Endothelial cell of umbilical vein (primary cell): ENCODE measurements at regions of chr16 and their contacts with region 1.

Region 1: GRCh38 chr16:88737298-88738150 is 31.2 kb downstream of the CTU2 start:
- DNase-seq: peak; percentile 50
- H3K4me3 ChIP-seq: no peak overlapping the region
- H3K27ac ChIP-seq: no peak overlapping the region
- H3K4me1 ChIP-seq: no peaks in the 10 kb centered on the region
- H3K27me3 ChIP-seq: no peaks in the 10 kb centered on the region
- CTCF ChIP-seq: peak; percentile 97 to 99
- POLR2A ChIP-seq: no peak

Region 2: DNA sequence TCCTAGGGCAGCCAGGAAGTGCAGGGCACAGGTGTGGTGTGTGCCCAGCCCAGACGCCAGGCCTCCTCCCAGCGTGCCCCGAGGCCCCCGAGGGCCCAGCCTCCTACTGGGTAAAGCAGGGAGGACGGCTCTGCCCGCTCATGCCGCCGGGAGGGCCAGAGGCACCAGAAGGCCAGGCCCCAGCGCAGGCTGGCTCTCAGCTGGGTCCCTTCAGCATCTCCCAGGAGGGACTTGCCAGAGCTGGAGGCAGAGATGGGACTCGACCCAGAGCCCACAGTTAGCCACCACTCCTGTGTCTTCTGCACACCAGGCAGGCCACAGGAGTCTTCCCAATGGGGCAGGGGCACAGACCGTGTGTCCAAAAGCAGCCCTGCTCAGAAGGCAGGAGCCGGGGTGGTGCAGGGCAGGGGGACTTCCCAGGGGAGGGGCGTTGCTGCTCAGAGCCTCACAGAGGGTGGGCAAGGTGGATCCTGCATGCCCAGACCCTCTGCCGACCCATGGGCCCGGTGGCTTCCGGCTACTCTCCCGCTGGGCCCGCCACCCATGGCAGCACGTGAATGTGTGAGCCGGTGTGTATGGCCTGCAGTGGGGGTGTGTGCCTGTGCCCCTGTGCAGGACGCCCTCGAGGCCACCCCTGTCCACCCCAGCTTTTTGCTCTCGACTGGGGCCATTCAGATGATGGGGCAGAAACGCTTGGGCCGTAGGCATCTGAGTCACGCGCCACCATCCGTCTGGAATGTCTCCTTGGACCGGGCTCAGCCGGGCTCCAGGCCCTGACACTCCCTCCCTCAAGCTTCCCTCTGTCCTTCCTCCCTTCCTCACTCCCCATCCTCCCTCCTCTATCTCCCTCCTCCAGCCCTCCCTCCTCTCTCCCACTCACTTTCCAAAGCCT is 360.4 kb before region 1 on chr16:
- CTCF ChIA-PET with region 1: no interaction called
- POLR2A ChIA-PET with region 1: no interaction called
- dilution Hi-C with region 1: no loop called
- intact Hi-C with region 1: no loop called
- DNase-seq: no peak
- H3K4me3 ChIP-seq: no peak overlapping the region
- H3K27ac ChIP-seq: no peak overlapping the region
- H3K4me1 ChIP-seq: no peaks in the 10 kb centered on the region
- H3K27me3 ChIP-seq: no peaks in the 10 kb centered on the region
- CTCF ChIP-seq: no peak
- POLR2A ChIP-seq: no peak

Region 3: DNA sequence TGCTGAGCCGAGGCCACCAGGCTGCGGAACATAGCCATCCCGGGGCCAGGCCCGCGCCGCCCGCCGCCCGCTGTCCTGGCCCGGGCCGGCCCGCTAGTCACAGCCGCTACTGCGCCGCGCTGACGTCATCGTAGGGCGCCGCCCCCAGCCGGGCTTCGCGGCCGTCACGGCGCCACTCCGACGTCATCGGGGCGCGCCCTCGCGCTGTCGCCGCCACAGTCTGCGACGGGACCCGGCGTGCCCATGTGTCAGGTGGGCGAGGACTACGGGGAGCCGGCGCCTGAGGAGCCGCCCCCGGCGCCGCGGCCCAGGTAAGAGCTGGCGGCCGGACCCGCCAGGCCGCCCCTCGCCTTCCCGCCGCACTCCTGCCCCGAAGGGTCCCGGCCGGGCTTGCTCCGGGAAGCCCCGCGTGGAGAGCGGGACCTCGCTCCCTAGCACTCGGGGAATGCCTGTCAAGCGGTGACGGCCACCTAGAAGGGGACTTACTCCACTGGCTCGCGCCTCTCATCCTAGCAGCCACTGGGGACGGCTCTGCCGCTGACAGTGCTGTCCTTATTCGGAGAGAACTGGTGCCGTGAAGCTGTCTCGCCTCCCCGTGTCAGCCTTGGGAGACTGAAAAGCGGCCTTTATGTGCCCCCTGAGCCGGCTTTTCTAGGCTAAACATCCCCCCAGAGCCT is 31.1 kb before region 1 on chr16 and contains the starts of genes CTU2 and RNF166:
- CTCF ChIA-PET with region 1: interaction called, 25 read pairs
- POLR2A ChIA-PET with region 1: no interaction called
- dilution Hi-C with region 1: no loop called
- intact Hi-C with region 1: no loop called
- DNase-seq: peak; percentile 84
- H3K4me3 ChIP-seq: peak within 1 kb of the TSS; percentile 69 to 90 (median 79)
- H3K27ac ChIP-seq: peak within 1 kb of the TSS; percentile 45
- H3K4me1 ChIP-seq: peaks cover 45% of the 10 kb centered on the region
- H3K27me3 ChIP-seq: no peaks in the 10 kb centered on the region
- CTCF ChIP-seq: no peak
- POLR2A ChIP-seq: peak; percentile 78
- total RNA-seq, gene CTU2: 33.7 and 37.5 TPM in 2 replicates
- total RNA-seq, gene RNF166: 38.8 and 41.8 TPM in 2 replicates

Region 4: GRCh38 chr16:88754912-88755744 is 17.6 kb after region 1 on chr16:
- CTCF ChIA-PET with region 1: interaction called, 31 read pairs
- POLR2A ChIA-PET with region 1: no interaction called
- dilution Hi-C with region 1: no loop called
- intact Hi-C with region 1: no loop called
- DNase-seq: peak; percentile 20
- H3K4me3 ChIP-seq: no peak overlapping the region
- H3K27ac ChIP-seq: no peak overlapping the region
- H3K4me1 ChIP-seq: peaks cover 5% of the 10 kb centered on the region
- H3K27me3 ChIP-seq: no peaks in the 10 kb centered on the region
- CTCF ChIP-seq: peak; percentile 41 to 43
- POLR2A ChIP-seq: no peak

Region 5: DNA sequence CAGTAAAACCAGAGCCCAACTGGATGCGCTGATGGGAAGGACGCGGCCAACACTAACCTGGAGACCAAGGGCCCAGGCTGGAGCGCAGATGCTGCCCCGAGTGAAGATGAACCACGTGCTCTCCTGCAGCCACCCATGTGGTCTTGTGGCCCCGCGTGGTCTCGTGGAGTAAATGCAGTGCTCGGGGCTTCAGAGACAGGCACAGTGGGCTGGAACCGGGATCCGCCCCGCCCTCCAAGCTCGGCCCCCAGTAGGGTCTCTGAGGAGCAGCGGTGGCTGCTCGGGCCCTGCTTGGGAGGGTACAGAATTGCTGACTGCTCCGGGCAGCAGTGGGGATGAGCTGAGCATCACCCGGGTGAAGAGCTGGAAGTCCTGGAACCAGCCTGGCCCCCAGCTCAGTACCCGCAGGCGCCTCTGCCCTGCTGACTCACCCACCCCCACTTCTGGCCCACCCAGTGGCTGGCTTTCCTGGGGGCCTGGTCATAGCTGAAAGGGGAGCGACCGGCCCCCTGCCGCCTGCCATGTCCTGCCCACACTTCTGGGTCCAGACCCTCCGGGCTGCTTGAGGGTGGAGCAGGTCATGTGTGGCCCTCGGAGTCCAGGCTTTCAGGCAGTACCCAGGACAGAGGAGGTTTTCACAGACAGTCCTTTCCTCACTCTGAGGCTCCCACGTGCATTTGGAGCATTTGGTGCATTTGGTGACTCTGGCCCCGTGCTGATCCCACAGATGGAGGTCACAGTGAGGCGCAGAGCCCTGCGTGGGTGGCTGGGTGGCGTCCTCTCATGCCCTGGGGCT is 54.4 kb after region 1 on chr16:
- CTCF ChIA-PET with region 1: interaction called, 56 read pairs
- POLR2A ChIA-PET with region 1: no interaction called
- dilution Hi-C with region 1: no loop called
- intact Hi-C with region 1: no loop called
- DNase-seq: no peak
- H3K4me3 ChIP-seq: no peak overlapping the region
- H3K27ac ChIP-seq: no peak overlapping the region
- H3K4me1 ChIP-seq: no peaks in the 10 kb centered on the region
- H3K27me3 ChIP-seq: peaks cover 0 to 4% of the 10 kb centered on the region in 2 experiments
- CTCF ChIP-seq: no peak
- POLR2A ChIP-seq: no peak

Region 6: DNA sequence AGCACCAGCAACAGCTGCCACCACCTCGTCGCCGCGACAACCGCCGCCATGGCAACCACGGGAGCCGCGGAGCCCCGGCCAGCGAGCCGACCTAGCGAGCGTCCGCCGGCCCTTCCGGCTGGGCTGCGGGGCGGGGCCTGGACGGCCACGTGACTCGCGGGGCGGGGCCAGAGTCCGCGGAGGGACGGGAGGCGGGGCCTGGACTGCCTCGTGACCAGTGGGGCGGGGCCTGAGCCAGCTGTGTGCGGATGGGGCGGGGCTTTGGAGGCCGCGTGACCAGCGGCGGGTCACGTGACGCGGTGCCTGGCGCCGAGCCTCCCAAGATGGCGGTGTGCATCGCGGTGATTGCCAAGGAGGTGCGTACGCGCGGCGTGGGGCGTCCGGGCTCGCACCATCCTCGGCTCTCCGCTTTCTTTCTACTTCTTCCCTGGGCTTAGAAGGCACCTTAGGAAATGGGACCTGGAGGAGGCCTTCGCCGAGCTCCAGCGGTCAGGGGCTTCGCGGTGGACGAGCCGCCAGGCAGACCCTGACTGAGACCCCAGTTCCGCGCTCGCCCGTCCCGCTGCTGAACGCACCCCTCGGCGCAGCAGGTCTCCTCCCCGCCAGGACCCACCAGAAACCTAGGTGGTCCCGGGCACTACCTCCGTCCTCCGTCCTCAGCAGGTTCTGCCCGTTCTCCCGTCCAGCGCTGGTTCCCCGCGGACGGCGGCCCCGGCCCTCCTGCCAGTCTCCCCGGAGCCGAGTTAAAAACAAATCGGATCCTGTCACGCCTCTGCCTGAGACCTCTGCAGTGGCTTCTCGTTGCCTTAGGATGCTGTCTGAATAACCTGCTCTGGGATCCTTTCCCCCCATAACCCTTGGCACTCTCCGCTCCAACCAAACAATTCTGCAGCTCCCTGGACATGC is 119.6 kb after region 1 on chr16 and contains the starts of genes GALNS and TRAPPC2L:
- CTCF ChIA-PET with region 1: interaction called, 23 read pairs
- POLR2A ChIA-PET with region 1: no interaction called
- dilution Hi-C with region 1: no loop called
- intact Hi-C with region 1: loop called (anchors 1 kb)
- DNase-seq: peak; percentile 96
- H3K4me3 ChIP-seq: peak within 1 kb of the TSS; percentile 45 to 100 (median 72)
- H3K27ac ChIP-seq: peak within 1 kb of the TSS; percentile 1
- H3K4me1 ChIP-seq: peaks cover 4% of the 10 kb centered on the region
- H3K27me3 ChIP-seq: no peaks in the 10 kb centered on the region
- CTCF ChIP-seq: no peak
- POLR2A ChIP-seq: peak; percentile 90
- total RNA-seq, gene GALNS: 32.5 and 40.2 TPM in 2 replicates
- total RNA-seq, gene TRAPPC2L: 61.9 and 80.0 TPM in 2 replicates